IMR-90 (cell line): ENCODE measurements at regions of chr13 and their contacts with region 1.

Region 1: GRCh38 chr13:110412132-110412914 is 105.2 kb downstream of the COL4A2 start:
- DNase-seq: peak; percentile 100
- ATAC-seq: peak; percentile 84
- H3K4me3 ChIP-seq: no peak overlapping the region
- H3K27ac ChIP-seq: peak overlapping the region; percentile 71
- H3K4me1 ChIP-seq: peaks cover 37% of the 10 kb centered on the region
- H3K27me3 ChIP-seq: no peaks in the 10 kb centered on the region
- CTCF ChIP-seq: peak; percentile 98
- POLR2A ChIP-seq: peak; percentile 42; the same call in 1 of the 2 replicates
- RAD21 ChIP-seq: peak; percentile 94

Region 2: DNA sequence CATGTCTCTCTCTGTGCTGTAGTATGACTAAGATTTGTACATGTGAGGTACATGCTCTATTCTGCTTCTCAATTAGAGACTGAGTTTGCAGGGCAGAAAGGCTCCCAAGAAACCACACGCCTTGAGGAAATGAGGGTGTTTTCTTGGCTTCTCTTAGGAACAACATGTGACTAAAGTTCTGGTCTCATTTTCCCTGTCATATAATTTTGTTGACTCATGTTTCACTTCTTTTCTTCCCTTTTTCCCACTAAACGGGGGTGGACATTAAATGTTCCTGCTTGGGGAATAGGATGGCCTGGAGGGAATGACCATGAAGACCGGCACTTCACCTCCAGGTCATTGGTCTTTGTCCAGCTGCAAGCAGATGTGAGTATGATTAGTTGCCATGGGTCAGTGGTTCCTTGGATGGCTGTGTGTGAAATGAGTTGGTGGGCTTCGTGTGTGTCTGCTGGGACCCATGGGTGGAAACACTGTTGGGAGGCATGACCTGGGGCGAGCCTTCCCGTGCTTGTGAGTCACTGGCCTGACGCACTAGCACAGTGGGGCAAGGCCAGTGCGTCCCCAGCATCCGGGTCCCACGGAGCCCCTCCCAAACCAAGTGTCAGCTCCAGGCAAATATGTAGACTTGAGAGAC is 161.9 kb before region 1 on chr13:
- CTCF ChIA-PET with region 1: interaction called, 3 read pairs
- POLR2A ChIA-PET with region 1: no interaction called
- dilution Hi-C with region 1: no loop called
- in situ Hi-C with region 1: no loop called
- intact Hi-C with region 1: loop called (anchors 1 kb)
- DNase-seq: peak; percentile 77
- ATAC-seq: no peak
- H3K4me3 ChIP-seq: no peak overlapping the region
- H3K27ac ChIP-seq: peak overlapping the region; percentile 78
- H3K4me1 ChIP-seq: peaks cover 41% of the 10 kb centered on the region
- H3K27me3 ChIP-seq: no peaks in the 10 kb centered on the region
- CTCF ChIP-seq: no peak
- POLR2A ChIP-seq: 0 out of 2 replicates have a peak, but pooled peaks have one; percentile 22
- RAD21 ChIP-seq: no peak

Region 3: GRCh38 chr13:110340812-110341444 is 71.4 kb before region 1 on chr13:
- CTCF ChIA-PET with region 1: no interaction called
- POLR2A ChIA-PET with region 1: no interaction called
- dilution Hi-C with region 1: no loop called
- in situ Hi-C with region 1: no loop called
- intact Hi-C with region 1: loop called (anchors 5 kb)
- DNase-seq: peak; percentile 93
- ATAC-seq: peak; percentile 59
- H3K4me3 ChIP-seq: no peak overlapping the region
- H3K27ac ChIP-seq: peak overlapping the region; percentile 88
- H3K4me1 ChIP-seq: peaks cover 53% of the 10 kb centered on the region
- H3K27me3 ChIP-seq: no peaks in the 10 kb centered on the region
- CTCF ChIP-seq: 0 out of 2 replicates have a peak, but pooled peaks have one; percentile 0
- POLR2A ChIP-seq: peak; percentile 68
- RAD21 ChIP-seq: 0 out of 2 replicates have a peak, but pooled peaks have one; percentile 17

Region 4: GRCh38 chr13:110379905-110380341 is 32.4 kb before region 1 on chr13:
- CTCF ChIA-PET with region 1: no interaction called
- POLR2A ChIA-PET with region 1: no interaction called
- dilution Hi-C with region 1: no loop called
- in situ Hi-C with region 1: no loop called
- intact Hi-C with region 1: loop called (anchors 1 kb)
- DNase-seq: peak; percentile 89
- ATAC-seq: peak; percentile 70
- H3K4me3 ChIP-seq: no peak overlapping the region
- H3K27ac ChIP-seq: peak overlapping the region; percentile 70
- H3K4me1 ChIP-seq: peaks cover 32% of the 10 kb centered on the region
- H3K27me3 ChIP-seq: no peaks in the 10 kb centered on the region
- CTCF ChIP-seq: no peak
- POLR2A ChIP-seq: no peak
- RAD21 ChIP-seq: no peak; the same call in 1 of the 2 replicates